ENCODE measurements at regions of chr1 and their contacts with region 1.

Region 1: GRCh38 chr1:91611498-91611917 is 110.9 kb downstream of the CDC7 start:
- DNase-seq: peak; percentile 86 to 93
- H3K4me3 ChIP-seq: no peak overlapping the region
- H3K4me3 Mint-ChIP-seq: peak overlapping the region; percentile 33
- H3K27ac Mint-ChIP-seq: peak overlapping the region; percentile 95
- H3K4me1 ChIP-seq: peaks cover 47% of the 10 kb centered on the region
- H3K4me1 Mint-ChIP-seq: peaks cover 24% of the 10 kb centered on the region
- H3K27me3 ChIP-seq: no peaks in the 10 kb centered on the region
- H3K27me3 Mint-ChIP-seq: no peaks in the 10 kb centered on the region
- CTCF ChIP-seq: peak in 1 of 2 experiments; percentile 41

Region 2: GRCh38 chr1:91529856-91530255 is 81.7 kb before region 1 on chr1:
- CTCF ChIA-PET with region 1: no interaction called
- POLR2A ChIA-PET with region 1: interaction called, 4 read pairs
- intact Hi-C with region 1: loop called (anchors 1 kb)
- DNase-seq: peak in 1 of 2 experiments; percentile 28
- H3K4me3 ChIP-seq: no peak overlapping the region
- H3K4me3 Mint-ChIP-seq: no peak overlapping the region
- H3K27ac Mint-ChIP-seq: no peak overlapping the region
- H3K4me1 ChIP-seq: no peaks in the 10 kb centered on the region
- H3K4me1 Mint-ChIP-seq: peaks cover 12% of the 10 kb centered on the region
- H3K27me3 ChIP-seq: no peaks in the 10 kb centered on the region
- H3K27me3 Mint-ChIP-seq: no peaks in the 10 kb centered on the region
- CTCF ChIP-seq: peak in 1 of 2 experiments; percentile 3

Region 3: GRCh38 chr1:91555821-91556531 is 55.5 kb before region 1 on chr1:
- CTCF ChIA-PET with region 1: interaction called, 5 read pairs
- POLR2A ChIA-PET with region 1: interaction called, 6 read pairs
- intact Hi-C with region 1: loop called (anchors 1 kb)
- DNase-seq: no peak
- H3K4me3 ChIP-seq: no peak overlapping the region
- H3K4me3 Mint-ChIP-seq: no peak overlapping the region
- H3K27ac Mint-ChIP-seq: peak overlapping the region; percentile 74
- H3K4me1 ChIP-seq: peaks cover 21% of the 10 kb centered on the region
- H3K4me1 Mint-ChIP-seq: peaks cover 37% of the 10 kb centered on the region
- H3K27me3 ChIP-seq: no peaks in the 10 kb centered on the region
- H3K27me3 Mint-ChIP-seq: no peaks in the 10 kb centered on the region
- CTCF ChIP-seq: no peak

Region 4: GRCh38 chr1:91673613-91674012 is 62.1 kb after region 1 on chr1:
- CTCF ChIA-PET with region 1: no interaction called
- POLR2A ChIA-PET with region 1: no interaction called
- intact Hi-C with region 1: no loop called
- DNase-seq: no peak
- H3K4me3 ChIP-seq: no peak overlapping the region
- H3K4me3 Mint-ChIP-seq: no peak overlapping the region
- H3K27ac Mint-ChIP-seq: no peak overlapping the region
- H3K4me1 ChIP-seq: no peaks in the 10 kb centered on the region
- H3K4me1 Mint-ChIP-seq: peaks cover 6% of the 10 kb centered on the region
- H3K27me3 ChIP-seq: no peaks in the 10 kb centered on the region
- H3K27me3 Mint-ChIP-seq: no peaks in the 10 kb centered on the region
- CTCF ChIP-seq: no peak